Posterior cingulate gyrus (tissue), 11 donors: ENCODE measurements at regions of chr5 and their contacts with region 1.

Region 1: GRCh38 chr5:119743927-119744326 is 114.6 kb downstream of the FAM170A start:
- DNase-seq: peak in 1 of 10 donors; percentile 15

Region 2: GRCh38 chr5:119220576-119221197 is 523.2 kb before region 1 on chr5:
- intact Hi-C with region 1: no loop called
- DNase-seq: no peak

Region 3: GRCh38 chr5:119470851-119471451 is 273.0 kb before region 1 on chr5:
- intact Hi-C with region 1: loop called (anchors 2 kb)
- DNase-seq: peak in 2 of 10 donors; percentile 20 to 49

Region 4: GRCh38 chr5:119721775-119722174 is 22.2 kb before region 1 on chr5:
- intact Hi-C with region 1: no loop called
- DNase-seq: no peak

Region 5: GRCh38 chr5:119757276-119757675 is 13.3 kb after region 1 on chr5:
- intact Hi-C with region 1: no loop called
- DNase-seq: no peak

Region 6: GRCh38 chr5:120174089-120174488 is 430.2 kb after region 1 on chr5:
- intact Hi-C with region 1: no loop called
- DNase-seq: no peak